HCT116 (cell line): ENCODE measurements at regions of chr15 and their contacts with region 1.

Region 1: DNA sequence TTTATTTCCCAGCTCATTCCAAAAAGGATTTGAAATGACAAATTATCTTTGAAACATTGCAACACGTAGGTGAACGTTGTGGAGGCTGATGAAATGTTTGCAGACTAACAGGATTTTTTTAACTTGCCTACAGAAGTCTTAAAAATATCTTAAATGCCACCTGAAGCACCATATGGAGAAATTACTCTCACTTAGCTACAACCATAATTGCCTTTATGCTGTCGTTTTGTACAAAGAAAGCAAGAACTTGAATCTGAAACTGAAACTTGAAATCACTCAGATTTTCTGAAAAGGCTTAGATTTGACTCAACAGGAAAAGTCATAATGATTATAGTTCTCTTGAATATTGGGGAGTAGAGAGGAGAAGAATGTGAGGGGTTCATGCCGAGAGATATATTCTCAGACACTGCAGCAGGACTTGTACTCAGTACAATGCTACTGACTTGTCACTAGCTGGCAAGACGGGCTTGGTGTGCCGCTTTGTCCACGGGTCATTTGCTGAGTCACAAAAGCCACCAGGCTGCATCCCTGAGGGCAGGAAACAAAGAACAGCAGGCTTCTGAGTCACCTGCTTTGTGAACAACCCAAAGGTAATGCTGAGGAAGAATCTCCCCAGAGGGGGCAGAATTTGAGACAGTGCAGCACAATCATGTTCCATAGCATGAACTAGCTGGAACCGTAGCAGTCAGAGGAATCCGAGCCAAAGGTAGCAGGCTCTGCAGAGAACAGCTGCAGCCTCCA is 7.1 kb upstream of the FMN1 start:
- DNase-seq: peak; percentile 95
- ATAC-seq: peak; percentile 99
- H3K4me3 ChIP-seq: peak overlapping the region; percentile 3 to 35; a peak in 2 of 4 replicates
- H3K27ac ChIP-seq: 0 out of 2 replicates have a peak overlapping the region, but pooled peaks have one; percentile 10
- H3K4me1 ChIP-seq: peaks cover 20 to 36% of the 10 kb centered on the region in 2 experiments
- H3K27me3 ChIP-seq: peaks cover 9% of the 10 kb centered on the region; the same call in 1 of the 2 replicates
- CTCF ChIP-seq: peak in 2 of 3 experiments; percentile 63 to 65; a peak in 4 of 6 replicates
- POLR2A ChIP-seq: no peak
- RAD21 ChIP-seq: peak; percentile 18; the same call in 1 of the 2 replicates

Region 2: DNA sequence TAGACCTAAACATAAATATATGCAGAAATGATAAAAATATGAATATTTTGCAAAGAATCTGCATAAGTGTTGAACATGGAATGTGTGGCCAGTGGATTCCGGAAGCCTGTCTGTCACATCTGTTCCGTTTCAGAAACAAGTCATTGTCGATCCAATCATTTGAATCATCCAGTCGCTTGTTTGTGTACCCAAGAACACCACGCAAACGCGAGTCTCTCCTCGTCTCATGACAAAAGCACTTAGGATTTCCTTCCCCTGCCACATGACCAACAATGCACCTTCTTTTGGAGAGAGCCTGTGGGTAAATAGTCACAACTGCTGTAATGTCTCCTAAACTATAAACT is 87.3 kb before region 1 on chr15:
- CTCF ChIA-PET with region 1: no interaction called
- POLR2A ChIA-PET with region 1: no interaction called
- RAD21 ChIA-PET with region 1: no interaction called
- intact Hi-C with region 1: no loop called
- DNase-seq: no peak
- ATAC-seq: no peak
- H3K4me3 ChIP-seq: no peak overlapping the region
- H3K27ac ChIP-seq: no peak overlapping the region
- H3K4me1 ChIP-seq: no peaks in the 10 kb centered on the region
- H3K27me3 ChIP-seq: no peaks in the 10 kb centered on the region
- CTCF ChIP-seq: no peak
- POLR2A ChIP-seq: no peak
- RAD21 ChIP-seq: no peak

Region 3: GRCh38 chr15:33188641-33189257 is 12.9 kb before region 1 on chr15:
- CTCF ChIA-PET with region 1: no interaction called
- POLR2A ChIA-PET with region 1: no interaction called
- RAD21 ChIA-PET with region 1: no interaction called
- intact Hi-C with region 1: no loop called
- DNase-seq: no peak
- ATAC-seq: no peak
- H3K4me3 ChIP-seq: no peak overlapping the region
- H3K27ac ChIP-seq: no peak overlapping the region
- H3K4me1 ChIP-seq: no peaks in the 10 kb centered on the region
- H3K27me3 ChIP-seq: no peaks in the 10 kb centered on the region
- CTCF ChIP-seq: no peak
- POLR2A ChIP-seq: no peak
- RAD21 ChIP-seq: no peak

Region 4: GRCh38 chr15:33215941-33216872 is 14.5 kb after region 1 on chr15:
- CTCF ChIA-PET with region 1: interaction called, 11 read pairs
- POLR2A ChIA-PET with region 1: interaction called, 4 read pairs
- RAD21 ChIA-PET with region 1: interaction called in 1 of 2 experiments, 3 read pairs
- intact Hi-C with region 1: no loop called
- DNase-seq: no peak
- ATAC-seq: peak; percentile 86
- H3K4me3 ChIP-seq: no peak overlapping the region
- H3K27ac ChIP-seq: no peak overlapping the region
- H3K4me1 ChIP-seq: peaks cover 0 to 6% of the 10 kb centered on the region in 2 experiments; a peak in 2 of 4 replicates
- H3K27me3 ChIP-seq: no peaks in the 10 kb centered on the region
- CTCF ChIP-seq: peak; percentile 33 to 74 (median 56); a peak in 5 of 6 replicates
- POLR2A ChIP-seq: no peak
- RAD21 ChIP-seq: peak; percentile 34

Region 5: DNA sequence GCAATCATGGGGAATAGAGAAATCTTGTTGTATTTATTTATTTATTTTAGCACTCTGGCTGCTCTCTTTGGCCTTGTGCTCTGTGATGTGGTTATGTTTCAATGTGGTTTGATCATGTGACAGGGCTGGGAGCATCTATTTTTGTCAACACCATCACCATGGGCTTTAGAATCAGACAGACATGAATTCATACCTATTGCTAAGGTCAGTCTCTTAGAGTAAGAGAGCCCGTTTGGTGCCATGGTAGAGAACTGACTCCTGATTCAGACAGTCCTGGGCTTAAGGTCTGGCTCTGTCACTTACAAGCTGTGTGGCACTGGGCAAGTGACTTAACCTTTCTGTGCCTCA is 266.1 kb after region 1 on chr15:
- CTCF ChIA-PET with region 1: no interaction called
- POLR2A ChIA-PET with region 1: no interaction called
- RAD21 ChIA-PET with region 1: no interaction called
- intact Hi-C with region 1: no loop called
- DNase-seq: no peak
- ATAC-seq: no peak
- H3K4me3 ChIP-seq: no peak overlapping the region
- H3K27ac ChIP-seq: no peak overlapping the region
- H3K4me1 ChIP-seq: no peaks in the 10 kb centered on the region
- H3K27me3 ChIP-seq: peaks cover 35% of the 10 kb centered on the region; the same call in 1 of the 2 replicates
- CTCF ChIP-seq: no peak
- POLR2A ChIP-seq: no peak
- RAD21 ChIP-seq: no peak

Region 6: GRCh38 chr15:33639978-33640377 is 438.3 kb after region 1 on chr15:
- CTCF ChIA-PET with region 1: no interaction called
- POLR2A ChIA-PET with region 1: no interaction called
- RAD21 ChIA-PET with region 1: no interaction called
- intact Hi-C with region 1: no loop called
- DNase-seq: no peak
- ATAC-seq: no peak
- H3K4me3 ChIP-seq: no peak overlapping the region
- H3K27ac ChIP-seq: no peak overlapping the region
- H3K4me1 ChIP-seq: no peaks in the 10 kb centered on the region
- H3K27me3 ChIP-seq: peaks cover 95% of the 10 kb centered on the region
- CTCF ChIP-seq: no peak
- POLR2A ChIP-seq: no peak
- RAD21 ChIP-seq: no peak